Activated CD4-positive, alpha-beta T cell treated with anti-CD3 and anti-CD28 coated beads for 36 hours (primary cell): ENCODE measurements at regions of chr11 and their contacts with region 1.

Region 1: GRCh38 chr11:20127671-20128527 is 32.4 kb downstream of the DBX1 start:
- DNase-seq: peak; percentile 88
- ATAC-seq: peak; percentile 83
- H3K4me3 Mint-ChIP-seq: no peak overlapping the region
- H3K27ac Mint-ChIP-seq: no peak overlapping the region
- H3K4me1 Mint-ChIP-seq: peaks cover 10% of the 10 kb centered on the region
- H3K27me3 Mint-ChIP-seq: peaks cover 10% of the 10 kb centered on the region

Region 2: DNA sequence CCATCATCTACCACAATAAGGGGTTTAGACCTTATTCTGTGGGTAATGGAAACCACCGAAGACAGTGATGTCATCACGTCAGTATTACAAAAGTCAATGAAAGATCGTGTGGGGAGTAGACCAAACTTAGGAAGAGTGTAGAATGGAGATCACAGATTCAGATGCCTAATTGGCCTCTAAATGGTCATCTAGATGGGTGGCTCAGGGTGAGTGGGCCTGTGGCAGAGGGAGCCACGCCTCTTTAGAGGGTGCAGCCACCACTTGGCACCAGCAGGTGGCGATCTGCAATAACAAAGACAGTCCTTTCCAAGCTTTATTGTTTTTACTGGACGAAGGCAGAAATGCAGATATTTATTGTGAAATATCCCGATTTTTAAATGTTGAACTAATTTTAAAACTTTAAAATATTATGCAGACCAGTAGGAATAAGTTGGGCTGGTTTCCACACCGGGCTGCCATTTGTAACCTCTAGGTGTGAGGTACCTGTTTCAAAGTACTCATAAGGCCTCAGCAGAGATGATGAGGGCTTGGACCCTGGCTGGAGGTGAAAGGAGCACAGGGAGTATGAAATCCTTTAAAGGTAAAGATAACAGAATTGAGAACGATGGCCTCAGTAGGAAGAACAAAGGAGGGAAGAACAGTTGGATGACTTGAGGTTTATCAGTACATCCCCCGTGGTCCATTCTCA is 189.6 kb before region 1 on chr11:
- CTCF ChIA-PET with region 1: interaction called, 5 read pairs
- POLR2A ChIA-PET with region 1: no interaction called
- intact Hi-C with region 1: loop called (anchors 1 to 5 kb)
- DNase-seq: peak; percentile 65
- ATAC-seq: peak; percentile 57
- H3K4me3 Mint-ChIP-seq: no peak overlapping the region
- H3K27ac Mint-ChIP-seq: no peak overlapping the region
- H3K4me1 Mint-ChIP-seq: no peaks in the 10 kb centered on the region
- H3K27me3 Mint-ChIP-seq: peaks cover 6% of the 10 kb centered on the region

Region 3: GRCh38 chr11:20110908-20111669 is 16.8 kb before region 1 on chr11:
- CTCF ChIA-PET with region 1: interaction called, 10 read pairs
- POLR2A ChIA-PET with region 1: no interaction called
- intact Hi-C with region 1: no loop called
- DNase-seq: peak; percentile 70
- ATAC-seq: peak; percentile 77
- H3K4me3 Mint-ChIP-seq: no peak overlapping the region
- H3K27ac Mint-ChIP-seq: no peak overlapping the region
- H3K4me1 Mint-ChIP-seq: peaks cover 7% of the 10 kb centered on the region
- H3K27me3 Mint-ChIP-seq: peaks cover 8% of the 10 kb centered on the region

Region 4: DNA sequence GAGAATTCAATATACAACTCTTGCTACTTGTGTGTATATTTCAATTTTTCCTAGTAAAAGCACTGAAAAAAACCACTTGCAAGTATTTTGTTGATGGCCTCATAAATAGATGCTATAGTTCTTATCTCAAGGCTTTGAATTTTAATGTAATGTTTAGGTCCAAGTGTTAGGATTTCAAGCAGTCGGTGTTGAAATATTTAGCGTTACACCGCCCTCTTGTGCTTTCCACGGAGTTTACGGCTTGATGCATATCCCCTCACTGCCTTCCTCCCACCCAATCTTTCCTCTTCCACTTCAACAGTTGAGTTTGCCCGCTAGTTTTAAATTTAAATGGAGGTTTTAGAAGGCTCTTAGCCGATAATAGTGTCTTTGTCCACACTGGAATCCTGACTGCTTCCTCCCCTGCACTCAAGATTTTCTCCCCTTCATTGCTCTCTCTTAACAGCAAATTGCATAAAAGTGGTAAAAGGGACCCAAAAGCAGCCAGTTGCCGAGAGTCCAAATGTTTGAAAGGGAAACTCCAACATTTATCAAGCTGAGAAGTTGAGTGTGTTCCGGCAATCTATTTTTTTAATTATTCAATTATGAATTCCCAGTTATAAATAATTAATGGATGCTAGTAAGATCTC is 209.7 kb after region 1 on chr11:
- CTCF ChIA-PET with region 1: interaction called, 7 read pairs
- POLR2A ChIA-PET with region 1: no interaction called
- intact Hi-C with region 1: loop called (anchors 1 kb)
- DNase-seq: peak; percentile 31
- ATAC-seq: no peak
- H3K4me3 Mint-ChIP-seq: no peak overlapping the region
- H3K27ac Mint-ChIP-seq: no peak overlapping the region
- H3K4me1 Mint-ChIP-seq: peaks cover 5% of the 10 kb centered on the region
- H3K27me3 Mint-ChIP-seq: peaks cover 39% of the 10 kb centered on the region

Region 5: DNA sequence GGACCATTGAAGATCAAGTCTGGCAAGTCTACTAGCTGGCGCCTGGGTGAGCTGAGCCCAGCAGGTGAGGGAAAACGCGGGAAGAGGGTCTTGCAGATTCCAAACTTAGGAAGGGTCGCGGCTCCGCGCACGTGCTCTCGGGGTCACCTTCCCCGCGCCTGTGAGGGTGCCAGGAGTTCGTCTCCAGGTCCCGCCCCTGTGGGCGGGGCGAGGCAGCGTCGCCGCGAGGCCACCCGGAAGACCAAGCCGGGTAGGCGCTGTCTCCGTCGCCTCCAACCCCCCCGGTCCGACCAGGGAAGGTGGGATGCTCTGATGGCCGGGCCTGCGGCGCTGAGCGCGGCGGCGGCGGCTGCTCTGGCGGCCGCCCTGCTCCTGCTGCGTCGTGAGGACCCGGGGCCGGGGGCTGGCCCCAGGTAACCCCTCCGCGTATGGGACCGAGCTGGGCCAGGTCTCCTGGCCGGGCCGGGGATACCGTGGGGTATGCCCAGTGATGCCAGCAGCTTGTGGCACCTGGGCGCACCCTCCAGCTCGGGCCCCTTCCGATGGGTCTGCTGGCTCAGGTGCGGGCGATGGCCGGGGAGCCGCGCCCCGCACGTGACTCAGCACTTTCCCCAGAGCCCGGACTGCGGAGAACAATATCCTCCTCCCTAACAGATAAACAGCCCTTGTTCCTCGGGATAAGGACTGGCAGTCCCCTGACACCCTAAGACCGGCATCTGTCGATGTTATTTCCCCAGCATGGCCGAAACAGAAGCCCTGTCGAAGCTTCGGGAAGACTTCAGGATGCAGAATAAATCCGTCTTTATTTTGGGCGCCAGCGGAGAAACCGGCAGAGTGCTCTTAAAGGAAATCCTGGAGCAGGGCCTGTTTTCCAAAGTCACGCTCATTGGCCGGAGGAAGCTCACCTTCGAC is 235.9 kb after region 1 on chr11 and contains the start of gene HTATIP2:
- CTCF ChIA-PET with region 1: interaction called, 109 read pairs
- POLR2A ChIA-PET with region 1: no interaction called
- intact Hi-C with region 1: no loop called
- DNase-seq: peak; percentile 82
- ATAC-seq: peak; percentile 79
- H3K4me3 Mint-ChIP-seq: peak within 1 kb of the TSS; percentile 76
- H3K27ac Mint-ChIP-seq: peak within 1 kb of the TSS; percentile 92
- H3K4me1 Mint-ChIP-seq: peaks cover 68% of the 10 kb centered on the region
- H3K27me3 Mint-ChIP-seq: no peaks in the 10 kb centered on the region
- total RNA-seq, gene HTATIP2: 41.4 to 60.4 TPM

Region 6: GRCh38 chr11:20511982-20512381 is 384.1 kb after region 1 on chr11:
- CTCF ChIA-PET with region 1: no interaction called
- POLR2A ChIA-PET with region 1: no interaction called
- intact Hi-C with region 1: no loop called
- DNase-seq: no peak
- ATAC-seq: no peak
- H3K4me3 Mint-ChIP-seq: no peak overlapping the region
- H3K27ac Mint-ChIP-seq: no peak overlapping the region
- H3K4me1 Mint-ChIP-seq: no peaks in the 10 kb centered on the region
- H3K27me3 Mint-ChIP-seq: no peaks in the 10 kb centered on the region

Region 7: GRCh38 chr11:20609727-20610707 is 482.1 kb after region 1 on chr11:
- CTCF ChIA-PET with region 1: interaction called, 12 read pairs
- POLR2A ChIA-PET with region 1: no interaction called
- intact Hi-C with region 1: loop called (anchors 1 kb)
- DNase-seq: peak; percentile 81
- ATAC-seq: peak; percentile 86
- H3K4me3 Mint-ChIP-seq: no peak overlapping the region
- H3K27ac Mint-ChIP-seq: no peak overlapping the region
- H3K4me1 Mint-ChIP-seq: peaks cover 7% of the 10 kb centered on the region
- H3K27me3 Mint-ChIP-seq: peaks cover 62% of the 10 kb centered on the region